K562 (cell line): ENCODE measurements at regions of chr10 and their contacts with region 1.

Region 1: DNA sequence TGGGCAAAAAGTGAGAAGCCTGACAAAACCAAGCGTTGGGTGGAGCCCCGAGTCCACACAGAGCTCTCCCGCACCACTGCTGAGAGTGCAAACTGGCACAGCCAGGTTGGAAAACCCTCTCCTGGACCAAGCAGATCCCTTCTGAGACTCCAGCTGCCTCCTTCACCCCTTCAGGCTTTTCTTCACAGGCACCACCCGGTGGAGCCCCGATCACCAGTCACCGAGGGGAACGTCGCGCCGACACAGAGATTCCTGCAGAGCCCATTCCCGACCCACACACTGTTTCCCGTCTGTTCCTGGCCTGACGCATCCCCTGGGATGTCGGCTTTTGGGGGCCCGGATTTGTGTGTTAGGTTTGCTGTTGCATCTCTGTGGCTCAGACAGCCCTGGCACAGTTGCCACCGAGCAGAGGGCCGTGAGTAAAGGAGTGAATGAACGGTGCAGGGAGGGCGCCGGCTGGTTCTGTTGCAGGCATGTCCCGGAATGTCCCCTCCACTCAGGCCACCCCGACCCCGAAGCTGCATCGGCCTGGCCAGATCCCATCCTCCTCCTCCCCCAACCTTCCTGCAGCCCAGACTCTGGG is 51.0 kb upstream of the INPP5A start:
- DNase-seq: no peak
- ATAC-seq: no peak
- H3K4me3 ChIP-seq: no peak overlapping the region
- H3K27ac ChIP-seq: no peak overlapping the region
- H3K4me1 ChIP-seq: peaks cover 0 to 5% of the 10 kb centered on the region in 2 experiments; a peak in 2 of 5 replicates
- H3K27me3 ChIP-seq: peaks cover 22 to 44% of the 10 kb centered on the region in 2 experiments
- CTCF ChIP-seq: no peak
- EP300 ChIP-seq: no peak
- POLR2A ChIP-seq: no peak
- RAD21 ChIP-seq: no peak

Region 2: DNA sequence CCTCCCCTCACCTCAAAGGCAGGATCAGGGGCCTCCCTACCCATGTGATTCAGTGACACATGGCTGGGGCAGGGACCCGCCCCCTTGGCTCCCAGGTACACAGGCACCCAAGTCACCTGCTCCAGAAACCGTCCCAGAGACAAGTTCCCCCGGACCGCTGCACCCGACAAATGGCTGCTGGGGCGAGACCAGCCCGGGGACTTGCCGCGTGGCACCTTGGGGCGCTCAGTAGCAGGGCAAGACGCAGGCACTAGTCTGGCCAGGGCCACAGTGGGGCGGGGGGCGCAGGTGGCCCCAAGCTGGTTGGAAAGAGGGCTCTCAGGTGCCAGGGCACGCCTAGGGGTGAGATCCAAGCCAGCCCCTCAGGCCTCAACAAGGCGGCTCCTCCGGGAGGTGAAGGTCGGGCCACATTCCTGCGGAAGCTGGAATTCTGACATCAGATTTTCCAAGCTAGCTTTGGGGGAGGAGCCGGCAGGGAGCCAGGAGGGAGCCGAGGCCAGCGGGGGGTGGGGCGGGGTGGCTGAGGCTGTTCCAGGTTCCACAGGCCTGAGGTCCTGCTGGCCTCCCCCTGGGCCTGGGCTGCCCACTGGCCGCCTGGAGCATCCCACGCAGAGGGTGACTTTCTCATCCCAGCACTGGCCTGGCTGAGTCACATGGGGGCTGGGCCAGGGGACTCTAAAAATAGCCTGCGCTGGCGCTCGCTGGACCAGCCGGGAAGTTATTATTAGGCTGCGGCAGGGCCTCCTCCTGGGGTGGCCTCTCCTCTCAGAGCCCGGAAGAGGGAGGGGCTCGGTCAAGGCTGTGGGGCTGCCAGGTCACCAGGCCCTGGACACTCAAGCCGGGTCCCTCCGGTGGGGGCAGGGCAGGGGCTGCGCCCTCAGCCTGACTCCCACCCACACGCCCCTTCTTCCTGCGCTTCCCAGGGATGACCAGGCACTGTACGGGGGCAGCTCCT is 30.4 kb after region 1 on chr10:
- CTCF ChIA-PET with region 1: no interaction called
- POLR2A ChIA-PET with region 1: no interaction called
- in situ Hi-C with region 1: no loop called
- intact Hi-C with region 1: loop called (anchors 1 kb)
- DNase-seq: peak; percentile 61 to 84 (median 76)
- ATAC-seq: peak; percentile 82
- H3K4me3 ChIP-seq: no peak overlapping the region
- H3K27ac ChIP-seq: no peak overlapping the region
- H3K4me1 ChIP-seq: peaks cover 25 to 51% of the 10 kb centered on the region in 2 experiments
- H3K27me3 ChIP-seq: peaks cover 0 to 14% of the 10 kb centered on the region in 2 experiments; a peak in 2 of 5 replicates
- CTCF ChIP-seq: no peak
- EP300 ChIP-seq: no peak
- POLR2A ChIP-seq: no peak
- RAD21 ChIP-seq: peak in 1 of 2 experiments; percentile 21; a peak in 1 of 4 replicates

Region 3: DNA sequence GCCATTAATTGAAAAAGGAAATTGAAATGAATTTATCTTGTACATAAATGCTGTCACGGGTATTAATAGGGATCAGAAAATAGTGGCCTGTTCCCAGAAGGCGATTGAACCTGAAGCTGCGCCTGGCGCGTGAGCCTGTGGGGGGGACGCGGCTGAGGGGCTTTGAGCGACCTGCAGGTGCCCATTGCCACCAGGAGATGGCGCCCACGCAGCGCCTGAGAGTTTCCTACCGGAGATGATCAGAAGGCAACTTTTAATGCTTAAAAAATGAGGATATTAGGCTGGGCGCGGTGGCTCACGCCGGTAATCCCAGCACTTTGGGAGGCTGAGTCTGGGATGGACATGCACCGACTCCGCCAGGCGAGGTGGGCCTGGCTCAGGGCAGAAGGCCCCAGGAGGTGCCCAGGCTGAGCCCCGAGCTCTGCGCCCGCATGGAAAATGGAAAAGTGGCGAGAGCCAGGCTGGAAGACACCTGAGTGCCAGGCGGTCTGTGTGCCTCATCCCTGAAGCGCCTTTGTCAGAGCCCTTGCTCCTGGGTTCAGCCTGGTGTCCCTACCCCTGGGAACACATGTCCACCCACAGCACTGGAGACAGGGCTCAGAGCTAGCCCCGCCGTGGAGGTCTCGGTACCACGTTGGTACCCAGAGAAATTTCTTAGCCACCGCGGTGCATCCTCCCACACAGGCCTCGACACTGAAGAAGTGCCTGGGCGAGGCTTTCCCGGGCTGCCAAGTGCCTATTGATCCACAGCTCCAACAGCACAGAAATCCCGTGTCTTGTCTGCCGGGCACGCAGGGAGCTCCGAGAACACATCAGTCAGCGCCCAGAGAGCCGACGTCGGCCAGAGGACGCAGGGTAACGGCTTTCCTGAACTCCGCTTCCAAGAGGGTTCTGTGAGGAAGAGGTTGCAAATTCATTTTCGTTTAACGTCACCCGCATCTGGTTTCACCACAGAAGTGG is 168.4 kb after region 1 on chr10:
- CTCF ChIA-PET with region 1: no interaction called
- POLR2A ChIA-PET with region 1: no interaction called
- in situ Hi-C with region 1: no loop called
- intact Hi-C with region 1: no loop called
- DNase-seq: peak; percentile 64 to 82 (median 80)
- ATAC-seq: peak; percentile 91
- H3K4me3 ChIP-seq: no peak overlapping the region
- H3K27ac ChIP-seq: no peak overlapping the region
- H3K4me1 ChIP-seq: peaks cover 0 to 19% of the 10 kb centered on the region in 2 experiments; a peak in 2 of 5 replicates
- H3K27me3 ChIP-seq: no peaks in the 10 kb centered on the region
- CTCF ChIP-seq: peak; percentile 80 to 85 (median 81)
- EP300 ChIP-seq: no peak
- POLR2A ChIP-seq: no peak
- RAD21 ChIP-seq: peak; percentile 57 to 76